ENCODE measurements at regions of chr13 and their contacts with region 1.

Region 1: DNA sequence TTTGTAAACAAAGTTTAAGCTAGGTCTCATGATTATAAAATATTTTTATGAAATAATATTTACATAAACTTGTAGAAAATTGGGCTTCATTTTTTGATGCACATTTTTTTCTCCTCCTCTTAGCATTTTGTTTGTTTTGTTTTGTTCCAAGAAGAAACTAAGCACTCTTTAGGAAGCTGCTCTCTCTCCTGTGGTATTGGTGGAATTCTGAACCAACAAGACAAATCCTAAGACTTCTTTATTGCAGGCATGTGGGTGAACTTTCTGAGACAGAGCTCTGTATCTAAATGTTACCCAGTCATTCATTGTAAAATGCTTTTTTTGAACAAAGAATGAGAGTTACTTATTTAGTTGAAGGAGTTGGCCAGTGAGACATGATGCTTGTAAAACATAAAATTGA is 39.3 kb downstream of the LMO7 start:
- DNase-seq: no peak
- H3K4me3 ChIP-seq: no peak overlapping the region
- CTCF ChIP-seq: no peak

Region 2: DNA sequence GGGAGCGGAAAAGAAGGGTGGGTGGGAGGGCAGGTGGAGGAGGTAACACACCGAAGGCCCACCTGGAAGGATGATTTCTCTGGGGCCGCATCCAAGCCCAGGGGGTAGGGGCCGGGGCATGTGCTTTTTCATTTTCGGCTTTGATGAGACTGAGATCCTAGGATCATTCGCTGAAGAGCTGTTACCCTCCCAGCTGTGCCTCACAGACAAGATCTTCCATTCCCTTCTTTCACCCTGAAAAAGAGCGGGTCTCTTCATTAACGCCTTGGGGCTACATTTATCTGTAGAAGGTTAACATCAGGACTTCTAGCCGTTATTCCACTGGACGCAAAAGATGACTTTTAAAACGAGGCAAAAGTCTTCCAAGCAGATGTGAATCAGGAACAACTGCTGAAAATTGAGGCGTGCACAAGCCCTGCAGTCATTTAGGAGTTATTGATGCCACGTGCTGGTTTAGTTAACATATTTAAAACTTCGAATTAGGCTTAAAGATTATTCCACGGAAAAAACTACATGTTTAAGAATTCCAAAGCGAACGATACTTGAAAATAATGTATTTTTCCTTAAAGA is 38.2 kb before region 1 on chr13:
- CTCF ChIA-PET with region 1: no interaction called
- POLR2A ChIA-PET with region 1: no interaction called
- DNase-seq: no peak
- H3K4me3 ChIP-seq: peak overlapping the region; percentile 97
- CTCF ChIP-seq: no peak

Region 3: DNA sequence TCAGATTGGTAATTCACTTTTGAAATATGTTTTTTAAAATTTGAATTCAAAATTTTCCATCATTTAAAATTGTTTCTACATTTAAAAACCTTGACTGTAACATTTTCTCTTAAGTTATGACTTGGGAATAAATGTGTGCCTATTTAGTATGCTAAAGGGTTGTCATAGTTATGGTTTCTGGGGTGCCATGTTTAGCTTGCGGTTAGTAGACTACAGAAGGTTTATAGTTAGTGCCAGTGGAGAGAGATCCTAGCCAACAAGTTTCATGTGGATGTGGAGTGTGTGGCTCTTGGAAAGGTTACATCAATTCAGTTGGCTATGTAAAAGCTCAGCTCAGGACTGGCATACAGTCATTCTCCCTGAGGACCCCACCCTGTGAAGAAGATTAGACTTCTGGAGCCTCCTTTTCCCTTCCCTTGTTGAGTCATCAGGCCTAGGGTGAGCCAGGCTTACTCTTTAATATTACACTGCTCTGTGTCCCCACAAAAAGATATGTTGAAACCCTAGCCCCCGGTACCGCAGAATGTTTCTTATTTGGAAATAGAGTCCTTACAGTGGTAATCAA is 18.9 kb before region 1 on chr13:
- CTCF ChIA-PET with region 1: interaction called, 10 read pairs
- POLR2A ChIA-PET with region 1: no interaction called
- DNase-seq: no peak
- H3K4me3 ChIP-seq: no peak overlapping the region
- CTCF ChIP-seq: no peak

Region 4: GRCh38 chr13:75687150-75687763 is 11.8 kb after region 1 on chr13:
- CTCF ChIA-PET with region 1: interaction called, 77 read pairs
- POLR2A ChIA-PET with region 1: no interaction called
- DNase-seq: no peak
- H3K4me3 ChIP-seq: no peak overlapping the region
- CTCF ChIP-seq: peak; percentile 32

Region 5: DNA sequence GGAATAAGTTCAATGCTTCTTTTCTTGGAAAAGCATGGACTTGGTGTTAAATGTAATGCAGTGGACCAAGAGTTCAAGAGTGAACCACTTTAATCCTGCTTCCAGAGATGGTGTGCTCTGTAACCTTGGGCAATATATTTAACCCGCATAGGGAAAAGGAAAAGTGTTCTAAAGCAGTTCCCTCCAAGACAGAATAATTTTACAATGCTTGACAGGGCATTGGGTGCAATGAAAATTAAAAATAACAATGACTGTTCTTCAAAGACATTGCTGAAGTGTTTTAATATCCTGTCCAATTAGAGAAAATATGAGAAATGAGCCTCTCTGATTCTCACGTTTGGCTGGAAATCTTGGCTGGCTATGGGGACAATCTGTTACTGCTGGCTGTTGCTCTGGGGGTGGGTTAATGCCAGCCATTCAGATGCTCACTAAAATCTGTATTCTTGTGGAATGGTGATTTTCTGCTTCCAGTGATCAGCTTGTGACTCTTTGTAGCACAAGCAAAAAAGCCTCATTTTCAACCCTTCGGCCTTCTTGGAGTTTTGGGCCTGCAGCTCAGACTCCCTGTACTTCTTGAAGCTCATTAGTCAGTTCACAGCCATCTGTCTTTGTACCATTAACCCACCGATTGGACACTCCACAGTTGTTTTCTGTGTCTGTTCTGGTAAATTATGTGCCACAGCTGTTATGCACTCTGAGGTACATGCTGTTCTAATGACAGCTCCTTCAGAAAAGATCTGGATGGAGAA is 271.3 kb after region 1 on chr13:
- CTCF ChIA-PET with region 1: no interaction called
- POLR2A ChIA-PET with region 1: no interaction called
- DNase-seq: no peak
- H3K4me3 ChIP-seq: no peak overlapping the region
- CTCF ChIP-seq: no peak

Measured in AG04449 (cell line).